PC-9 (cell line): ENCODE measurements at regions of chr11 and their contacts with region 1.

Region 1: DNA sequence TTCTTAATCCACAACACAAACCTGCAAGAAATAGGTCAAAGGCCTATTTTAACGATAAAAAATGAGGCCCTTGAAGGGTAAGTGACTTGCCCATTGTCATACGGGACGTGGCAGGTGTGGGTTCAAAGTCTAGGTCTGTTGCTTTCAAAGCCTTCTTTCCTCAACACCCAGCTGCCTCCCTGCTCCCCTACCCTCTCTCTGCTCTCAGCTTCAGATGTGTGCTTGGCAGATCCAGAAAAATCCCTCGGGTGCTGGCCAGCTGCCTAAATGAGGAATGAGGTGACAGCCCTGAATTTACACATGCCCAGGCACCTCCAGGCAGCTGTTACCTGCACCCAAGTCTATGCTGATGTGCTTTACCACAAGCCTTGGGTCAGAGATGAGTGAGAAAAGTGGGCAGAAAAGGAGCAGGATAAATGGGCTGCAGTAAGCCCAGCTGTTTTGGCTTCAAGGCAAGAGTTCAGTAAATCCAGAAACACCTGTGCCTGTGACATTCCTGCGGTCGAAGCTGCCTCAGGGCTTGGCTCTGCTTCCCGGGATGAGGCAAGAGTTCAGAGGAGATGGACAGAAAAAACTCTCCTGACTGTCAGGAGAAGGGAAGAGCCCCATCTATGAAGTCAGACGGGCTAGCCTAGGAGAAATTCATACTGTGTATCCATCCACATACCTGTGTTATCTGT is 49.9 kb upstream of the LDLRAD3 start:
- DNase-seq: peak; percentile 89 to 93
- H3K4me3 ChIP-seq: no peak overlapping the region
- H3K27ac ChIP-seq: no peak overlapping the region
- H3K4me1 ChIP-seq: peaks cover 27% of the 10 kb centered on the region
- H3K27me3 ChIP-seq: no peaks in the 10 kb centered on the region
- CTCF ChIP-seq: no peak

Region 2: DNA sequence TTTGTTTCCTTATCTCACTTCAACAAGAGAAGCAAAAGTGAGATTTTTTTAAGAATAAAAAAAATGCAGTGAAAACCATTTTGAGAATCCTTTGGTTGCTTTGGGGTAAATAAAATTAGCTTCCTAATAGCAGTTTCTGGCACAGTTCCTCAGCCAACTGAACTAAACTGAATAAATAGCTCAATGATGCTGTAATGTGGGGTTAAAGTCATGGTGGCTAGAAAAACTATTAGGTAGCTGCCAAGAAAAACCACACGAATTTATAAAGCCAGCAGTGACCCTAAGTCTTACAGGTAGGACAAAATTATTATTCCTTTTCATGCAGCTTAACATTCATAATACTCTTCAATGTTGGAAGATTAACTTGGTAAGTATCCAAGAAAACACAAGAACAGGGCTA is 1120.1 kb before region 1 on chr11:
- CTCF ChIA-PET with region 1: no interaction called
- POLR2A ChIA-PET with region 1: interaction called, 11 read pairs
- intact Hi-C with region 1: no loop called
- DNase-seq: peak in 1 of 2 experiments; percentile 68
- H3K4me3 ChIP-seq: no peak overlapping the region
- H3K27ac ChIP-seq: no peak overlapping the region
- H3K4me1 ChIP-seq: peaks cover 11% of the 10 kb centered on the region
- H3K27me3 ChIP-seq: no peaks in the 10 kb centered on the region
- CTCF ChIP-seq: no peak

Region 3: DNA sequence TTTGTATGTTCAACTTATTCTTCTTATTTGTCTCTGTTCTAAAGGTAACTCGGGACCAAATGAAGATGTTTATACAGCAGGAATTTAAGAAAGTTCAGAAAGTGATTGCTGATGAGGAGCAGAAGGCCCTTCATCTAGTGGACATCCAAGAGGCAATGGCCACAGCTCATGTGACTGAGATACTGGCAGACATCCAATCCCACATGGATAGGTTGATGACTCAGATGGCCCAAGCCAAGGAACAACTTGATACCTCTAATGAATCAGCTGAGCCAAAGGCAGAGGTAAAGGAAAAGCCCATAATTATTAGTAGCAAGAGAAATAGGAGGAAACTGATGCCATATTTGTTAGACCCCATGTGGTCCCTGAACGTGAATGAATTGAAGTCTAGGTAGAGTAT is 168.1 kb before region 1 on chr11:
- CTCF ChIA-PET with region 1: no interaction called
- POLR2A ChIA-PET with region 1: no interaction called
- intact Hi-C with region 1: no loop called
- DNase-seq: peak in 1 of 2 experiments; percentile 43
- H3K4me3 ChIP-seq: no peak overlapping the region
- H3K27ac ChIP-seq: no peak overlapping the region
- H3K4me1 ChIP-seq: 0 out of 2 replicates have a peak, but pooled peaks cover 9% of the 10 kb centered on the region
- H3K27me3 ChIP-seq: no peaks in the 10 kb centered on the region
- CTCF ChIP-seq: no peak

Region 4: GRCh38 chr11:36034551-36035331 is 140.8 kb after region 1 on chr11:
- CTCF ChIA-PET with region 1: no interaction called
- POLR2A ChIA-PET with region 1: no interaction called
- intact Hi-C with region 1: loop called (anchors 1 kb)
- DNase-seq: peak; percentile 55 to 97
- H3K4me3 ChIP-seq: 0 out of 2 replicates have a peak overlapping the region, but pooled peaks have one; percentile 25
- H3K27ac ChIP-seq: peak overlapping the region; percentile 38
- H3K4me1 ChIP-seq: peaks cover 25% of the 10 kb centered on the region
- H3K27me3 ChIP-seq: no peaks in the 10 kb centered on the region
- CTCF ChIP-seq: 0 out of 2 replicates have a peak, but pooled peaks have one; percentile 8